Tibial artery (tissue), 4 donors: ENCODE measurements at regions of chr3 and their contacts with region 1.

Region 1: GRCh38 chr3:148955544-148956346 is 35.6 kb upstream of the GYG1 start:
- DNase-seq: peak; percentile 69 to 88
- H3K4me3 ChIP-seq: peak overlapping the region in 1 of 2 donors; percentile 10
- H3K27ac ChIP-seq: peak overlapping the region; percentile 92 to 96
- H3K4me1 ChIP-seq: peaks cover 0 to 29% (median 18%) of the 10 kb centered on the region in 4 donors
- H3K27me3 ChIP-seq: no peaks in the 10 kb centered on the region
- CTCF ChIP-seq: peak; percentile 53 to 59

Region 2: GRCh38 chr3:149114458-149114857 is 158.7 kb after region 1 on chr3:
- intact Hi-C with region 1: loop called (anchors 10 kb)
- DNase-seq: no peak
- H3K4me3 ChIP-seq: no peak overlapping the region
- H3K27ac ChIP-seq: peak overlapping the region; percentile 56 to 62
- H3K4me1 ChIP-seq: peaks cover 0 to 21% (median 11%) of the 10 kb centered on the region in 4 donors
- H3K27me3 ChIP-seq: no peaks in the 10 kb centered on the region
- CTCF ChIP-seq: no peak

Region 3: DNA sequence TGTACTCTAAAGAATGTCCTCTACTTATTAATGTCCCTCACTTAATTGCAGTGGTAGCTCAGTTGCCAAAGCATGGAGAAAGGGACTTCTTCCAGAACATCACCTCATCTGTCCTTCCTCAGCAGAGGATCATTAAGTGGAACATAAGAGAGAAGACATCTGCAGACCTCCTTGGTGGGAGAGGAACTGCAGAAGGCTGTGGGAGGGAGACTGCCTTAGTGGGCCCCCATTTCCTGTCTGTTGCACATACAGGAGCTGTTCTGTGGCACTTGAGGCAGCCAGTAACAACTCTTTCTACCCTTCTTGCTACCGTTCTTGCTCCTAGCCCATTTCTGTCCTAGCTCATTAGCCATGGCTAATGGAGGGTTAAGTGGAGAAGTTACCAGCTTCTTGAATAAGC is 207.3 kb after region 1 on chr3:
- intact Hi-C with region 1: no loop called
- DNase-seq: no peak
- H3K4me3 ChIP-seq: no peak overlapping the region
- H3K27ac ChIP-seq: no peak overlapping the region
- H3K4me1 ChIP-seq: no peaks in the 10 kb centered on the region
- H3K27me3 ChIP-seq: no peaks in the 10 kb centered on the region
- CTCF ChIP-seq: no peak